Activated naive CD4-positive, alpha-beta T cell treated with anti-CD3 and anti-CD28 coated beads for 36 hours (primary cell): ENCODE measurements at regions of chr5 and their contacts with region 1.

Region 1: GRCh38 chr5:134370871-134371833 is at the start of gene UBE2B:
- DNase-seq: peak; percentile 99
- H3K4me3 Mint-ChIP-seq: peak within 1 kb of the TSS; percentile 98
- H3K27ac Mint-ChIP-seq: peak within 1 kb of the TSS; percentile 99
- H3K4me1 Mint-ChIP-seq: peaks cover 58% of the 10 kb centered on the region
- H3K27me3 Mint-ChIP-seq: no peaks in the 10 kb centered on the region
- total RNA-seq, gene UBE2B: 116 to 129 TPM

Region 2: DNA sequence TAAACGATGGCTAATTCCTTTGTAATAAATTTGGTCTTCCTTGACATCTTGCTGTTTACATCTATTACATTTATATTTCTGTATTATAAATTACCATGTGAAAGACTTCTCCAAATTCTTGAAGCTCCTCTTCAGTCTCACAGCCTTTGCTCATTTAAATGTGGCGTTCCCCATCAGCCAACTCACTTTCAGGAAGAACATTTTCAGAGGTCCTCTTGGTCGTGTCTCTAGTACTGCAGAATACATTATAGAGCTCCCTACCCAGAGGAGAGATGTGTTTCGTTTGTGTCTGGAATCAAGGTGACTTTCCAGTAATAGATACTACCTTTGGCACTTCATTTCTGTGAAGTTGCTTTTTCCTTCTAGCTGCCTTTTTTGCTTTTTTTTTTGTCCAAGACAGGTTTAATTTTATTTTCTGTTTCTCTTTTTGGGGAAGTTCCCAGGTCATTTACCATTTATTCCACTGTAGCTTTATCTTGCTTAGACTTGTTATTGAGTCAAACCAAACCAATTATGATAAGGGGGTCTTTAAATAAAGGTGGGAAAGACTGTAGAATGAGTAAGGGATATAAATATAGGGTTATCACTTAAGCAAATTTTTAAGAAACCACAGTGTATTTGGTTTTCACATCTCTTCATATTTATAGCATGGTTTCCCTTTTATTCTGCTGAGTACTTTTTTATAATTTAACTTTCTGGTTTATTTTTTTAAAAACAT is 13.0 kb after region 1 on chr5:
- CTCF ChIA-PET with region 1: interaction called, 9 read pairs
- intact Hi-C with region 1: loop called (anchors 1 kb)
- DNase-seq: no peak
- H3K4me3 Mint-ChIP-seq: peak overlapping the region; percentile 28
- H3K27ac Mint-ChIP-seq: peak overlapping the region; percentile 88
- H3K4me1 Mint-ChIP-seq: peaks cover 34% of the 10 kb centered on the region
- H3K27me3 Mint-ChIP-seq: no peaks in the 10 kb centered on the region

Region 3: GRCh38 chr5:134555890-134556311 is 184.7 kb after region 1 on chr5:
- CTCF ChIA-PET with region 1: no interaction called
- intact Hi-C with region 1: loop called (anchors 1 kb)
- DNase-seq: peak; percentile 98
- H3K4me3 Mint-ChIP-seq: peak overlapping the region; percentile 80
- H3K27ac Mint-ChIP-seq: peak overlapping the region; percentile 100
- H3K4me1 Mint-ChIP-seq: peaks cover 38% of the 10 kb centered on the region
- H3K27me3 Mint-ChIP-seq: no peaks in the 10 kb centered on the region

Region 4: DNA sequence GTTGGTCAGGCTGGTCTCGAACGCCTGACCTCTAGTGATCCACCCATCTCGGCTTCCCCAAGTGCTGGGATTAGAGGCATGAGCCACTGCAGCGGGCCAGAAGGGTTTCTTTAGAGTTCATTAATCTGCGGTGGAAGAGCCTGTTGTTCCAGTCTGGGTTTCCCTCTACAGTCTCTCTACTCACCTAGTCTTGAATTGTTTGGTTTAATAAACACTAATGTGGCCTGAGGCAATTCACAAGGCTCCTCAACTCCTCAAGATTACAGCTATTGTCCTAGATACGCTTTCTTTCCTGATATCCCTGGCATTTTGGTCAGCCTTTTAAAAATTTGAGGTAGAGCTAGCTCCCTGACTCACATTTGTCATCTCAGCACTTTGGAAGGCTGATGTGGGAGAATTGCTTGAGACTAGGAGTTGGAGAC is 266.0 kb after region 1 on chr5:
- CTCF ChIA-PET with region 1: no interaction called
- intact Hi-C with region 1: loop called (anchors 5 kb)
- DNase-seq: no peak
- H3K4me3 Mint-ChIP-seq: no peak overlapping the region
- H3K27ac Mint-ChIP-seq: no peak overlapping the region
- H3K4me1 Mint-ChIP-seq: peaks cover 7% of the 10 kb centered on the region
- H3K27me3 Mint-ChIP-seq: no peaks in the 10 kb centered on the region

Region 5: DNA sequence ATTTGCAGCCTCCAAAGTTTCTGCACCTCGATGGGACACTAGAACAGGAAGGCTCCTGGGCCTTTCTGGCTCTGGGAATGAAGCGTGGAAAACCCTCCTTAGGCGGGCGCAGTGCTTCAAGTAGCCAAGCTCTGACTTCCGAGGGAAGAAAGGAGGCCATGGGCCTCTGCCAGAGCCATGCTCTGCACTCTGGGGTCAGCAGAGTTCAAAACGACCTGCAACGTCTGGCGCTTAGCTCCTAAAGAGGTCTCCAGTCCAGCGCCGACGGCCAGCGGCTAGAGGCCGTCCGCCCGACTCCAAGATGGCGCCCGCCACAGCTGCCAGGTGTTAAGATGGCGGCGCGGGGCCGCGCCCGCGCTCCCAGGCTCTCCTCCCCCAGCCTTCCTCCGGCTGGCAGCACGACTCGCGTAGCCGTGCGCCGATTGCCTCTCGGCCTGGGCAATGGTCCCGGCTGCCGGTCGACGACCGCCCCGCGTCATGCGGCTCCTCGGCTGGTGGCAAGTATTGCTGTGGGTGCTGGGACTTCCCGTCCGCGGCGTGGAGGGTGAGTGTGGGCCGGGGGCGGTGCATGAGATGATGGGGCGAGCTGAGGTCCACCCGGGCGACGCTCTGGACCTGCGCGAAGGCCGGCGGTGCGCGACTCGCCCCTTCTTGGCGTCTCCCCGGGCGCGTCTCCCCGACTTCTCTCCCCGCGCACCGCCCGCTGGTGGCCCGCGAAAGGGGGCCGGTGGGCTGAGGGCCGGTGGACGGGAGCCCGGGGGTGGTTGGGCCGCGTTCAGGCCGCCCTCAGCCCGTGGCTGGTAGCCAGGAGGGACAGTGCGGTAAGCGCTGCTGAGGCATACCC is 503.1 kb after region 1 on chr5 and contains the start of gene TXNDC15:
- CTCF ChIA-PET with region 1: no interaction called
- intact Hi-C with region 1: loop called (anchors 1 kb)
- DNase-seq: peak; percentile 84
- H3K4me3 Mint-ChIP-seq: peak within 1 kb of the TSS; percentile 89
- H3K27ac Mint-ChIP-seq: peak within 1 kb of the TSS; percentile 92
- H3K4me1 Mint-ChIP-seq: peaks cover 30% of the 10 kb centered on the region
- H3K27me3 Mint-ChIP-seq: no peaks in the 10 kb centered on the region
- total RNA-seq, gene TXNDC15: 19.8 to 20.9 TPM